ENCODE measurements at regions of chr10 and their contacts with region 1.

Region 1: DNA sequence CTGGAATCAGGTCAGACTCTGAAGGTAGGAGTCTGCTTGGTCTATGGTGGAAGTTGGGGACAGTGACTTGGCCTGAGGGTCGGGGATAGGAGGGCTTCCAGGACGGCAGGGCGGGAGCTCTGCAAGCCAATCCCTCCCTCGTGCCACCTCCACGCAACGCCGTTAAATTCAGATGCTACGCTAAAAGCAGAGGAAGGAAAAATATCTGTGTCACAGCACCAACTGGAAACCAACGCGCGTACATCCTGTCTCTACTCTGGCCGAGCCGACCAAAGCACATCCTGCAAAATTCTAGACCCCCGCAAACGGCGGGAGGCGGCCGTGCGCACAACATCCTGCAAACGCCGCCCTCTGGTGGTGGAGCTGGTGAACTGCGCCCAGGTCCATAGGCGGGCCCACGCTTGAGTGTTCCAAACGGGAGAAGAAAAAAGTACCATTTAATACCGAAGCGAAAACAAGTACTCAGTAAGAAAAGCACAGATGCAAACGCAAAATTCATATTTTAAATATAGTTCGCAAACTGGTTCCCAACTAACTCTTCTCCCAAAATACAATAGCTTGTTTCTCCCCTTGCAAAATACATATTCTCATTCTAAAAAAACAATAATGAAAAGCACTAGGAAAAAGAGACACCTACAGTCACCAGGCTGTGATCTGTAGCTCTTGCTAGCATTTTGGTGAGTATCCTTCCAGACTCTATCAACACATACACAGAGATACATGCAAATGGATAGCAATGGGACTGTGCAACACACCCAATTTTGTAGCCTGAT is 45.7 kb upstream of the HSPA12A start:
- DNase-seq: peak; percentile 90
- ATAC-seq: peak; percentile 91
- H3K4me3 Mint-ChIP-seq: peak overlapping the region; percentile 55
- H3K27ac Mint-ChIP-seq: no peak overlapping the region
- H3K4me1 Mint-ChIP-seq: peaks cover 10% of the 10 kb centered on the region; the same call in 1 of the 2 replicates
- H3K27me3 Mint-ChIP-seq: 0 out of 2 replicates have a peak, but pooled peaks cover 6% of the 10 kb centered on the region
- CTCF ChIP-seq: peak; percentile 99

Region 2: GRCh38 chr10:116627386-116627933 is 160.6 kb before region 1 on chr10:
- CTCF ChIA-PET with region 1: interaction called, 36 read pairs
- POLR2A ChIA-PET with region 1: no interaction called
- DNase-seq: peak; percentile 76
- ATAC-seq: peak; percentile 96
- H3K4me3 Mint-ChIP-seq: peak overlapping the region; percentile 45
- H3K27ac Mint-ChIP-seq: no peak overlapping the region
- H3K4me1 Mint-ChIP-seq: no peaks in the 10 kb centered on the region
- H3K27me3 Mint-ChIP-seq: peaks cover 15% of the 10 kb centered on the region
- CTCF ChIP-seq: peak; percentile 45

Region 3: DNA sequence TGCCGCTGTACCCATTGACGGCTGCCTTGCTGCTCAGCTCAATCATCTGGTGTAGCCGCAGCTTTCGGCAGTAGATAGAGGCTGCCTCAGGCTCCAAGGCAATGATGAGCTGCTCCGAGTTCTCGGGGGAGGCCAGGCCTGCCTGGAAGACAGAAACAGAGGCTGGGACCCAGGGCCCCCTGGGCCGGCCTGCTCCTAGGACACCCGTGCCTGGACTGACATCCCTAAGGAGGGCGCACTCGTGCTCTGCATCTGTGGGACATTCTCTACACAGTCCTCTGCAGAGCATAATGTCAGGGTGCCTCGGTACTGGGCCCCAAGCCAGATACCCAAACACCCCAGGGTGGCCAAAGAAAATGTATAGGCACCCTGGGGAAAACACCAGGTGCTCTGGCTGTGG is 104.3 kb before region 1 on chr10:
- CTCF ChIA-PET with region 1: interaction called, 41 read pairs
- POLR2A ChIA-PET with region 1: interaction called, 3 read pairs
- DNase-seq: no peak
- ATAC-seq: no peak
- H3K4me3 Mint-ChIP-seq: no peak overlapping the region
- H3K27ac Mint-ChIP-seq: no peak overlapping the region
- H3K4me1 Mint-ChIP-seq: peaks cover 20% of the 10 kb centered on the region
- H3K27me3 Mint-ChIP-seq: no peaks in the 10 kb centered on the region
- CTCF ChIP-seq: no peak

Region 4: DNA sequence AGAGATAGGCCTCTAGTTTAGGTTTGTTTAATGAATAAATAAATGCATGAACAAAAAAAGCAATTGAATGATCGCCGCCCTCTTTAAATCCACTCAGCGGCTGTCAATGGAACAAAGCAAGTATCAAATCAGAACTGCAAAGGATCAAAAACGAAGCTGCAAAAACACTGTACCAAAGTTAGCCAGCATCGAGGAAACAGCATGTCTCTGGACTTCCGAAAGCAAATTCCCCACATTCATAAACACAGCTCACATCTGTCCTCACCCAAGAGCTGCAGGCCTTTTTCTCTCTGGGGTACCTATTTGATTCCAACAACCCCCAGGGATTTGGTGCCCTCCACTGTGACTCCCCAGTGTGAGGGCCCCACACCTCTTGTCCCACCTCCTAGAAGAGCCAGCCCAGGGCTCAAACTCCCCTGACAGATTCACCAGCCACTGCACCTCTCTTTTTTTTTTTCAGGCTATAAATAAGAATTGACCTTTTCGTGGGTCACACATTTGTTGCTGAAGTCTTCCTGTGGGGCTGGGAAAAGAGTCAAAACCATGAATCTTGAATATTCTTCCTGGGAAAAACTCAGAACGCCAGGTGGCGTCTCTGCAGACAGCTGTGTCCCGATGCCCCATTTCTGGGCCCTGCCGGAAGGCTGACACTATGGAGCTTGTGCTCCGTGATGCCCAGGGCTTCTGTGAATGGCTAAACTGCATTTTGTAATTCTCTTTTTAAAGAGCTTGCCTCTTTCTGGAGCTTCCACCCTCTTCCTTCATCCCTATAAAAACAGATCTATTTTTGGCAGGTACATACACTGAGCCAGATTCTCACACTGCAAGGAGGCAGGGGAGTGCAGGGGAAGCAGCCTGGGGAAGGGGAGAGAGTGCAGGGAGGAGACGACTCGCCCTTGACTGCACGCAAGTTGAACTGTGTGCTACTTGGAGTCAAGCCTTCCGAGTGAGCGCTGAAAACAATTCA is 97.4 kb before region 1 on chr10:
- CTCF ChIA-PET with region 1: interaction called, 25 read pairs
- POLR2A ChIA-PET with region 1: no interaction called
- DNase-seq: no peak
- ATAC-seq: peak; percentile 47
- H3K4me3 Mint-ChIP-seq: peak overlapping the region; percentile 46
- H3K27ac Mint-ChIP-seq: peak overlapping the region; percentile 19
- H3K4me1 Mint-ChIP-seq: peaks cover 58% of the 10 kb centered on the region
- H3K27me3 Mint-ChIP-seq: no peaks in the 10 kb centered on the region
- CTCF ChIP-seq: no peak

Region 5: GRCh38 chr10:116737627-116738327 is 50.3 kb before region 1 on chr10:
- CTCF ChIA-PET with region 1: interaction called, 19 read pairs
- POLR2A ChIA-PET with region 1: no interaction called
- DNase-seq: peak; percentile 49
- ATAC-seq: peak; percentile 47
- H3K4me3 Mint-ChIP-seq: no peak overlapping the region
- H3K27ac Mint-ChIP-seq: no peak overlapping the region
- H3K4me1 Mint-ChIP-seq: peaks cover 8% of the 10 kb centered on the region
- H3K27me3 Mint-ChIP-seq: peaks cover 40% of the 10 kb centered on the region
- CTCF ChIP-seq: no peak